ENCODE measurements at regions of chr7 and their contacts with region 1.

Region 1: DNA sequence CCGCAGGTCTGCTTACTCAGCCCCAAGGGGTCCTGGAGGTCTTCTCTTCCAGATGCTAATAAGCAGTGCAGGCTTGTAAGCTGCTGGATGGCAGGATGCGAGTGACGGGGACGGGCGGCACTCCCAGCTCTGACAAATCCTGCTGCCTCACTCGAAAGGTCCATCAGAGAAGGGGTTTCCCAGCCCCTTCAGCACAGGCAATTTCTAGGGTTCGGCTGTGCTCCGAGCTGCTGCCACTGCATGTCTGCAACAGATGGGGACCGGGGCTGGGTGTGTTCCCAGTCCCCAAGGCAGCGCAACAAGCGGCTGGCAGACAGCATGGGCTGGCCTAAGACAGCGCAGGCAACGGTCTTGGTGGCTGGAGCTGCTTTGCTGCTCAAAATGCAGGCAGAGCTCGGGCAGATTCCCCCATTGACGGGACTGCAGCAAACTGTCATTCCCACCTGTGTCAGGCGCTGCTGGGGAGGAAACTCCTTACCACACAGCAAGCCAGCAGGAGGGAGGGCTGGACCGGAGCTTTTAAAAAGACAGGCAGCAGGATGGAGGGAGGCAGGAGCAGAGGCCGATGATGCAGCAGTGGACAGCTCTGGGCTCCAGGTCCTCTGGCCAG is 62.4 kb downstream of the PRKAG2 start:
- DNase-seq: peak in 7 of 10 donors; percentile 58 to 81 (median 69)
- H3K4me3 ChIP-seq: peak overlapping the region; percentile 17 to 65 (median 49)
- H3K27ac ChIP-seq: peak overlapping the region in 58 of 59 donors; percentile 10 to 91 (median 80)
- H3K27me3 ChIP-seq: no peaks in the 10 kb centered on the region
- CTCF ChIP-seq: no peak

Region 2: GRCh38 chr7:151856098-151856497 is 41.6 kb after region 1 on chr7:
- intact Hi-C with region 1: loop called in 1 of 2 experiments (anchors 5 kb)
- DNase-seq: no peak
- H3K4me3 ChIP-seq: no peak overlapping the region
- H3K27ac ChIP-seq: peak overlapping the region in 11 of 59 donors; percentile 1 to 63 (median 35)
- H3K27me3 ChIP-seq: no peaks in the 10 kb centered on the region
- CTCF ChIP-seq: no peak

Region 3: GRCh38 chr7:151876899-151877777 is 62.6 kb after region 1 on chr7 and contains the start of gene PRKAG2:
- intact Hi-C with region 1: loop called in 1 of 2 experiments (anchors 5 kb)
- DNase-seq: peak in 7 of 10 donors; percentile 49 to 81 (median 61)
- H3K4me3 ChIP-seq: peak within 1 kb of the TSS; percentile 57 to 91 (median 81)
- H3K27ac ChIP-seq: peak within 1 kb of the TSS in 58 of 59 donors; percentile 15 to 92 (median 84)
- H3K27me3 ChIP-seq: no peaks in the 10 kb centered on the region
- CTCF ChIP-seq: peak in 17 of 56 donors; percentile 1 to 35 (median 16)
- total RNA-seq, gene PRKAG2: 39.2 to 105 (median 77.5) TPM

Measured in dorsolateral prefrontal cortex (tissue), 120 donors.